ENCODE measurements at regions of chr11 and their contacts with region 1.

Region 1: GRCh38 chr11:70270104-70270876 is at the start of gene PPFIA1:
- DNase-seq: peak; percentile 86 to 98 (median 96)

Region 2: GRCh38 chr11:69888483-69889076 is 381.7 kb before region 1 on chr11:
- intact Hi-C with region 1: no loop called
- DNase-seq: peak in 41 of 42 donors; percentile 18 to 89 (median 67)

Region 3: DNA sequence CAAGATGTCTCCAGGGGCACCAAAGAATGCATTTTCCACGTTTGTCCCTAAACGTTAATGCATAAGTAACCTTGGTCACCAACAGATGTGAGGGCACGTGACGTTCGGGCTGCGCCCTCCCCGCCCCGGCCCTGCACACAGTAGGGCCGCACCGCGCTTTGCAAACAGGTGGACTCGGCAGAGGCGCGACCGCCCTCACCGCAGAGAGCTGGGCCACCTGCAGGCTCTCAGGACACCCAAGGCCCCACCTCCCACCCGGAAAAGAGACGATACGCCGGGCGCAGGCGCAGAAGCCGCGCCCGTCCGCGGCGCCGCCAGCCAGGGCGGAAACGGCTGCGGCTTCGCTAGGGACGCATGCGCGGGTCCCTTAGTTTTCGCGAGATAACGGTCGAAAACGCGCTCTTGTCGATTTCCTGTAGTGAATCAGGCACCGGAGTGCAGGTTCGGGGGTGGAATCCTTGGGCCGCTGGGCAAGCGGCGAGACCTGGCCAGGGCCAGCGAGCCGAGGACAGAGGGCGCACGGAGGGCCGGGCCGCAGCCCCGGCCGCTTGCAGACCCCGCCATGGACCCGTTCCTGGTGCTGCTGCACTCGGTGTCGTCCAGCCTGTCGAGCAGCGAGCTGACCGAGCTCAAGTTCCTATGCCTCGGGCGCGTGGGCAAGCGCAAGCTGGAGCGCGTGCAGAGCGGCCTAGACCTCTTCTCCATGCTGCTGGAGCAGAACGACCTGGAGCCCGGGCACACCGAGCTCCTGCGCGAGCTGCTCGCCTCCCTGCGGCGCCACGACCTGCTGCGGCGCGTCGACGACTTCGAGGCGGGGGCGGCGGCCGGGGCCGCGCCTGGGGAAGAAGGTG is 67.2 kb before region 1 on chr11 and contains the start of gene FADD:
- intact Hi-C with region 1: loop called (anchors 10 kb)
- DNase-seq: peak; percentile 71 to 94 (median 88)

Region 4: DNA sequence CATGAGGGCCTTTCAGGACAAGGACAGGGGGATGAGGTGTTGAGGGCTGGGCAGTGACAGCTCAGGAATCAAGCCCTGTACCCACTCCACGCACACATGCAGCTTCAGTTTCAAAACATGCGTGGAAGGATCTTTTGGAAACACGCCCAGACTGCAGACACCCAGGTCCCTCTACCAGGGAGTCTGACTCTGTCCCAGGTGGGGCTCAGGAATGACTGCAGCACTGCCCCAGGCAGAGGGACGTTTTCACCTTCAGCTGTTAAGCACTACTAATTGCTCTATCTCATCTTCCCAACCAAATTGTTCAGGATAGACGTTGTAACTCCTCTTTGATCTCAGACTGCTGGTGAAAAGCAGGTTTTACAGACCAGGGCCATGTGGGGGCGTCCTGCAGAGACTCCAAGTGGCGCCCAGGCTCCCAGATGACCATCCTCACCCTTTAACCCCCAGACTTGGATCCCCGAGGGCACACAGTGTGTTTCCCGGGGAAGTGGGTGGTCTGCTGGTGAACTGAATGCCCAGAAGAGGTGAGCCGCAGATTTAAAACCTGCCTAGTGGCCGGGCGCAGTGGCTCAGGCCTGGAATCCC is 43.4 kb before region 1 on chr11:
- intact Hi-C with region 1: no loop called
- DNase-seq: no peak

Region 5: DNA sequence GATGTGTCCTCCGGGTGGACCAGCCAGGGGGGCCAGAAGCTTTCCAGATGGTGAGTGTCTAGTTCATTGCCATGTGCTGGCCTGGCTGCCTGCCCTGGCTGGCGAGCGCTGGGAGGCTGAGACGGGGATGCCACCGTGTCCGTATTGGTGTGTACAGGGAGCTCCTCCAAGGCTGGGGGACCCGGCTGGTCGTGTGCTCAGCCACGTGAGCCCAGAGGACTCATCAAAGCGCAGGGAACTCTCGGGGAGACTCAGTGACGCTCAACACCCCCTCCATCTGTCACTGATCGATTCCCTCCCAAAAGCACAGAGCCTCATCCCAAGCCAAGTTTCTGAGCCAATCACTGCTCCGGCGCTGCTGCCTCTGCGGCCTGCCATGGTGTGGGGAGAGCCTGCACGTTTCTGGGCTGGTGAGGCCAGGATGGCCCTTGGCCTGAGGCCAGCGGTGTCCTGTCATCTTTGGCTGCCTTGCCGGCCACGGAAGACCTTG is 558.3 kb after region 1 on chr11:
- intact Hi-C with region 1: no loop called
- DNase-seq: peak in 29 of 42 donors; percentile 13 to 62 (median 29)

Measured in head of caudate nucleus (tissue), 42 donors.